ENCODE measurements at regions of chr18 and their contacts with region 1.

Region 1: GRCh38 chr18:59459369-59460079 is 100.5 kb upstream of the LMAN1 start:
- DNase-seq: no peak
- H3K4me3 ChIP-seq: no peak overlapping the region
- H3K27ac ChIP-seq: no peak overlapping the region
- H3K4me1 ChIP-seq: no peaks in the 10 kb centered on the region
- H3K27me3 ChIP-seq: no peaks in the 10 kb centered on the region
- CTCF ChIP-seq: peak in 5 of 6 experiments; percentile 30 to 79 (median 56)
- POLR2A ChIP-seq: no peak

Region 2: GRCh38 chr18:59516356-59517155 is 57.0 kb after region 1 on chr18:
- intact Hi-C with region 1: loop called (anchors 10 kb)
- DNase-seq: peak; percentile 80 to 82
- H3K4me3 ChIP-seq: no peak overlapping the region
- H3K27ac ChIP-seq: peak overlapping the region; percentile 40 to 71 (median 68)
- H3K4me1 ChIP-seq: peaks cover 26 to 31% of the 10 kb centered on the region in 2 donors
- H3K27me3 ChIP-seq: no peaks in the 10 kb centered on the region
- CTCF ChIP-seq: no peak
- POLR2A ChIP-seq: no peak

Region 3: DNA sequence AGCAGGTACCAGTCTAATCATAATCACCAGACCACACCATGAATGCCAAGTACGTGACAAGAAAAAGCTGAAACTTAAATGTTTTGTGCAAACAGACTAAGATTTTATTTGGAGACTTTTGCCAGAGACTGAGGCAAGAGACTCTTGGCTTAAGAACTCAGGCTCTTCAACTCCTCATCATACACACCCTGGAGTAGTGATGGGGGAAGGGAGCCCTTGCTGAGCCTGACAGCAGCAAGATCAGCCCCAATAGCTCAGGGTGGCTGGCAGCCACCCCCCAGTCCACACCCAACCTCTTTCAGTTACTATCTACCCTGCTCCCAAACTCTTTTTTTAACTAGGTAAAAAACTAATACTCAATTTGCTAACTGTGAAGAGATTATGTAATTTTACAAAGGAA is 122.9 kb after region 1 on chr18:
- intact Hi-C with region 1: no loop called
- DNase-seq: peak; percentile 37 to 56
- H3K4me3 ChIP-seq: no peak overlapping the region
- H3K27ac ChIP-seq: no peak overlapping the region
- H3K4me1 ChIP-seq: peaks cover 6% of the 10 kb centered on the region in 2 donors
- H3K27me3 ChIP-seq: no peaks in the 10 kb centered on the region
- CTCF ChIP-seq: no peak
- POLR2A ChIP-seq: no peak

Region 4: DNA sequence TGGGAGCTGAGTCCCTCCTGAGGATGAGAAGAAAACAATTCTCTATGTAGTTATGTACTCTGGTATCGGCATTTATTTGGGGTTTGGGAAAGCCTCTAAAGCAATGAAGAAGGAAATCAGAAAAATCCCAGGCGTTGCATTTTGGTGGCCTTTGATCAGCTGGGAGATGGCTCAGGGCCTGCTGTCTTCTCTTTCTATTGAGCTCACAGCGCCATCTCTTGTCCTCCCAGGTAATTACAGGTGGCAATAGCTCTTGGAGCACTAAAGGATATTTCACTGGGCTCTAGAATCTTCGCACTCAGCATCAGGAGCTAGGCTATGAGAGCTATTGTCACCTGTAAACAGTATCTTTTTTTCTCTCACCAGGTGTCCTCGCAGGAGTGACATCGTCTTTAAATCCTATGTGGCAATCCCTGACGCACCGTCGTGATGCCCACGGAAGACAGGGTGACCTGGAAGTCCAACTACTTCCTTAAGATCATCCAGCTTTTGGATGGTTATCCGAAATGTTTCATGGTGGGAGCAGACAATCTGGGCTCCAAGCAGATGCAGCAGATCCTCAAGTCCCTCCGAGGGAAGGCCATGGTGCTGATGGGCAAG is 364.2 kb after region 1 on chr18:
- intact Hi-C with region 1: loop called (anchors 2 kb)
- DNase-seq: peak; percentile 70 to 79
- H3K4me3 ChIP-seq: no peak overlapping the region
- H3K27ac ChIP-seq: no peak overlapping the region
- H3K4me1 ChIP-seq: no peaks in the 10 kb centered on the region
- H3K27me3 ChIP-seq: no peaks in the 10 kb centered on the region
- CTCF ChIP-seq: peak; percentile 40 to 92 (median 85)
- POLR2A ChIP-seq: no peak

Measured in thyroid gland (tissue), 4 donors.